HepG2 (cell line): ENCODE measurements at regions of chr10 and their contacts with region 1.

Region 1: DNA sequence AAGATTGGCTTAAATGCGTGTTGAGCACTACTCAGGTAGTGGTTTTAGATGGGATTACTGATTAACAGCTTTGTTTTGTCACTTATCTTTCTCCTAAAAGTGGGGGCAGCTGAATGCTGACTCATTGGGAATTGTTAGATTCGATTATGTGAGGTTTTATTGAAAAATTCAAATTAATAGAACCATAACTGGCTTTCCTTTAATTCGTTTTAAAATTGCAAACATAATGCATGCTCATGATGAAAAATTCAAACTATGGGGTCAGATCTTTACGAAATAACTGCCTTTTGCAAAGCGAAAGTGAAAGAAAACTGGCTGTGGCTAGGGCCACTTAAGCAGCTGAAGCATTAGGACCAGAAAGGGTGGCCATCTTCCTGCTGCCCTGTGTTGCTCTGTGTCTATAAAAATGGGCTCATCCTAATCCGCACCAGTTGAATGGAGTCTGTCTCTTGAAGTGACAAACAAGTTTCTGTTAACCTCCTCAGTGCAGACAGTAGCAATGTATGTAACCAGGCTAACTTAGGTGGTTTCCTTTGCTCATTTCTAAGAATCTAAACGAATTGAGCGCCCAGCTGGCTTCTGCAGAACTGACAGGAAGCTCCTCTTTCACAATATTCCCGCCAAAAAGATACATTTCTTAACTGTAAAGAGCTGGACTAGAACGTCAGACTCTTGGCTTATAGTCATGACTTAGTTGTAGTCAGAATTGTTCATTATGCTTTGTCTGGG is 27.8 kb downstream of the DENND10 start:
- DNase-seq: no peak
- ATAC-seq: peak; percentile 20; the same call in 1 of the 3 replicates
- H3K4me3 ChIP-seq: peak overlapping the region in 1 of 3 experiments; percentile 27; a peak in 1 of 6 replicates
- H3K27ac ChIP-seq: peak overlapping the region; percentile 45
- H3K4me1 ChIP-seq: peaks cover 32% of the 10 kb centered on the region
- H3K27me3 ChIP-seq: no peaks in the 10 kb centered on the region
- CTCF ChIP-seq: no peak
- EP300 ChIP-seq: no peak
- POLR2A ChIP-seq: no peak
- RAD21 ChIP-seq: no peak

Region 2: GRCh38 chr10:119103903-119104652 is 27.6 kb before region 1 on chr10 and contains the start of gene DENND10:
- CTCF ChIA-PET with region 1: no interaction called
- POLR2A ChIA-PET with region 1: interaction called, 15 read pairs
- in situ Hi-C with region 1: no loop called
- intact Hi-C with region 1: no loop called
- DNase-seq: no peak
- ATAC-seq: peak; percentile 86
- H3K4me3 ChIP-seq: peak within 1 kb of the TSS; percentile 70 to 92 (median 83)
- H3K27ac ChIP-seq: peak within 1 kb of the TSS; percentile 63
- H3K4me1 ChIP-seq: peaks cover 56% of the 10 kb centered on the region
- H3K27me3 ChIP-seq: no peaks in the 10 kb centered on the region
- CTCF ChIP-seq: no peak
- EP300 ChIP-seq: no peak
- POLR2A ChIP-seq: peak; percentile 87 to 98
- RAD21 ChIP-seq: peak; percentile 50; the same call in 1 of the 2 replicates
- total RNA-seq, gene DENND10: 43.7 and 55.1 TPM in 2 replicates

Region 3: GRCh38 chr10:119333146-119333792 is 201.6 kb after region 1 on chr10:
- CTCF ChIA-PET with region 1: no interaction called
- POLR2A ChIA-PET with region 1: no interaction called
- in situ Hi-C with region 1: no loop called
- intact Hi-C with region 1: no loop called
- DNase-seq: no peak
- ATAC-seq: no peak
- H3K4me3 ChIP-seq: no peak overlapping the region
- H3K27ac ChIP-seq: no peak overlapping the region
- H3K4me1 ChIP-seq: peaks cover 6% of the 10 kb centered on the region
- H3K27me3 ChIP-seq: no peaks in the 10 kb centered on the region
- CTCF ChIP-seq: no peak
- EP300 ChIP-seq: no peak
- POLR2A ChIP-seq: no peak
- RAD21 ChIP-seq: no peak